Aorta (tissue), 5 donors: ENCODE measurements at regions of chr15 and their contacts with region 1.

Region 1: DNA sequence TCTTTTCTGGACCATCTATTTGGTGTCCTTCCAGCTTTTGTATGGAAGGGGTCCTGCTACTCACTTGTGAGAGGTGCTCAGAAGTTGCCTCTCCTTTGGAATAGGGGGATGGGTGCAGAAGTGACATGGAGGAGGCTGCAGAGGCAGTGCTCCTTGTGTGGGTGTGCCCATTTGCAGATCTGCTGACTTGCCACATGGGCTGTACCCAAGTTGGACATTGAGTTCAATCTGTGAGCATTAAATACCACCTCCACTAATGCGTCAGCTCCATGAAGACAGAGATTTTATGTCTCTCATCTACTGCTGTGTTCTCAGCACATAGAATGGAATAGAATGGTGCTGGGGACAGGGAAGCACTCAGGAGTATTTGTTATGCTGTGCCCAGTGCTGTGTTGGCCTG is 76.2 kb downstream of the RGMA start:
- DNase-seq: no peak
- ATAC-seq: no peak
- H3K4me3 ChIP-seq: no peak overlapping the region
- H3K27ac ChIP-seq: no peak overlapping the region
- H3K4me1 ChIP-seq: no peaks in the 10 kb centered on the region
- H3K27me3 ChIP-seq: no peaks in the 10 kb centered on the region

Region 2: GRCh38 chr15:92970656-92971055 is 42.1 kb before region 1 on chr15:
- intact Hi-C with region 1: loop called in 1 of 2 experiments (anchors 5 kb)
- DNase-seq: no peak
- ATAC-seq: no peak
- H3K4me3 ChIP-seq: no peak overlapping the region
- H3K27ac ChIP-seq: no peak overlapping the region
- H3K4me1 ChIP-seq: peaks cover 0 to 3% of the 10 kb centered on the region in 2 donors
- H3K27me3 ChIP-seq: no peaks in the 10 kb centered on the region

Region 3: GRCh38 chr15:93048759-93049161 is 36.0 kb after region 1 on chr15:
- intact Hi-C with region 1: no loop called
- DNase-seq: no peak
- ATAC-seq: no peak
- H3K4me3 ChIP-seq: no peak overlapping the region
- H3K27ac ChIP-seq: no peak overlapping the region
- H3K4me1 ChIP-seq: no peaks in the 10 kb centered on the region
- H3K27me3 ChIP-seq: no peaks in the 10 kb centered on the region